ENCODE measurements at regions of chr13 and their contacts with region 1.

Region 1: GRCh38 chr13:95301183-95301967 is at the start of gene ABCC4:
- DNase-seq: peak; percentile 37 to 58 (median 50)
- H3K4me3 ChIP-seq: peak within 1 kb of the TSS; percentile 65 to 70
- H3K4me3 Mint-ChIP-seq: peak within 1 kb of the TSS; percentile 82 to 93 (median 88)
- H3K27ac ChIP-seq: peak within 1 kb of the TSS; percentile 43
- H3K27ac Mint-ChIP-seq: peak within 1 kb of the TSS; percentile 36 to 95 (median 54)
- H3K4me1 ChIP-seq: peaks cover 14% of the 10 kb centered on the region
- H3K4me1 Mint-ChIP-seq: peaks cover 22 to 40% (median 30%) of the 10 kb centered on the region in 4 donors
- H3K27me3 ChIP-seq: no peaks in the 10 kb centered on the region
- H3K27me3 Mint-ChIP-seq: peaks cover 0 to 2% of the 10 kb centered on the region in 2 donors
- total RNA-seq, gene ABCC4: 7.9 to 10.0 TPM

Region 2: DNA sequence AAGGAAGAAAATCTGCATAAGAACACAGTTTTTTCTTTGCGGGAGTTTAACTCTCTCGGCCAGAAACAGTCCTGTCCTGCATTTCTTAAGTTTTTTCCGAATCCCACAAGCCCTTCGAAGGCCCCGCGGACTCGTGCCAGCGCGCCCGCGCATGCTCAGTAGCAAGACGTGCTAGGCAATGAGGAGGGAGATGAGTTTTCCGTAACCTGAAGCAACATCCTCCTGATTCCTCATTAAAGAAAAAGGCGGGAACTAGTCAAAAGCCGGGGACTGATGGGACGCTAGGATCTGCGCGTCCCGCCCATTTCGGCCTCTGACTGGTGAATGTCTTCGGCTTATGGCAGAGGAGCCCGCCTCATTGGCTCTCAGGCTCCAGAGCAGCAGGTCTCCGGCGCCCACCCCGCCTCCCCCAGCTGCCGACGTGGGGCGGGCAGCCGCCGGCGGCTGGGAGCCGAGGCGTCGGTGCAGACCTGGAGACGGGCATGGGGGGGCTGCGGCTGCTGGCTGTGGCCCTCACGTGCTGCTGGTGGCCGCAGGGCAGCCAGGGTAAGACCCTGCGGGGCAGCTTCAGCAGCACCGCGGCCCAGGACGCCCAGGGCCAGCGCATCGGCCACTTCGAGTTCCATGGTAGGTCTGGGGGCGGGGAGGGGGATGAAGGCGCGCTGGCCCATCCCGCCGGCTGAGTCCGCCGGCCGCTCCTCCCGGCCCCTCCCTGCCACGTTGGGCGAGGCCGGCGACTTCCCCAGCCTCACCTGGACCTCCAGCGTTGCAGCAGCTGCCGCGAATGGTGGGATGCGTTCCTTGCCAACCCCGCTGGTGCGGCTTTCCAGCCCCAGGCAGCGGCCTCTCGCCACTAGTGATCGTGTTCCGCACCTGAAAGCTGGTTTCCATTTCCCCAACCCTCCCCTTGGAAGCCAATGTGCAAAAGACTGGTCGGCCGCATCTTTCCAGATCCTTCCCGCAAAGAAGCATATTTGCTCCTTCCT is 699.6 kb before region 1 on chr13 and contains the start of gene GPR180:
- CTCF ChIA-PET with region 1: no interaction called
- POLR2A ChIA-PET with region 1: no interaction called
- intact Hi-C with region 1: loop called (anchors 2 kb)
- DNase-seq: peak; percentile 86 to 93 (median 89)
- H3K4me3 ChIP-seq: peak within 1 kb of the TSS; percentile 36 to 85
- H3K4me3 Mint-ChIP-seq: peak within 1 kb of the TSS; percentile 83 to 92 (median 86)
- H3K27ac ChIP-seq: peak within 1 kb of the TSS; percentile 57
- H3K27ac Mint-ChIP-seq: peak within 1 kb of the TSS; percentile 86 to 95 (median 92)
- H3K4me1 ChIP-seq: peaks cover 18% of the 10 kb centered on the region
- H3K4me1 Mint-ChIP-seq: peaks cover 22 to 36% (median 29%) of the 10 kb centered on the region in 4 donors
- H3K27me3 ChIP-seq: no peaks in the 10 kb centered on the region
- H3K27me3 Mint-ChIP-seq: no peaks in the 10 kb centered on the region
- total RNA-seq, gene GPR180: 4.8 to 5.3 TPM

Region 3: GRCh38 chr13:95289020-95289444 is 12.3 kb before region 1 on chr13:
- CTCF ChIA-PET with region 1: interaction called, 10 read pairs
- POLR2A ChIA-PET with region 1: no interaction called
- intact Hi-C with region 1: no loop called
- DNase-seq: no peak
- H3K4me3 ChIP-seq: no peak overlapping the region
- H3K4me3 Mint-ChIP-seq: no peak overlapping the region
- H3K27ac ChIP-seq: no peak overlapping the region
- H3K27ac Mint-ChIP-seq: no peak overlapping the region
- H3K4me1 ChIP-seq: no peaks in the 10 kb centered on the region
- H3K4me1 Mint-ChIP-seq: peaks cover 0 to 7% (median 4%) of the 10 kb centered on the region in 4 donors
- H3K27me3 ChIP-seq: no peaks in the 10 kb centered on the region
- H3K27me3 Mint-ChIP-seq: no peaks in the 10 kb centered on the region

Region 4: DNA sequence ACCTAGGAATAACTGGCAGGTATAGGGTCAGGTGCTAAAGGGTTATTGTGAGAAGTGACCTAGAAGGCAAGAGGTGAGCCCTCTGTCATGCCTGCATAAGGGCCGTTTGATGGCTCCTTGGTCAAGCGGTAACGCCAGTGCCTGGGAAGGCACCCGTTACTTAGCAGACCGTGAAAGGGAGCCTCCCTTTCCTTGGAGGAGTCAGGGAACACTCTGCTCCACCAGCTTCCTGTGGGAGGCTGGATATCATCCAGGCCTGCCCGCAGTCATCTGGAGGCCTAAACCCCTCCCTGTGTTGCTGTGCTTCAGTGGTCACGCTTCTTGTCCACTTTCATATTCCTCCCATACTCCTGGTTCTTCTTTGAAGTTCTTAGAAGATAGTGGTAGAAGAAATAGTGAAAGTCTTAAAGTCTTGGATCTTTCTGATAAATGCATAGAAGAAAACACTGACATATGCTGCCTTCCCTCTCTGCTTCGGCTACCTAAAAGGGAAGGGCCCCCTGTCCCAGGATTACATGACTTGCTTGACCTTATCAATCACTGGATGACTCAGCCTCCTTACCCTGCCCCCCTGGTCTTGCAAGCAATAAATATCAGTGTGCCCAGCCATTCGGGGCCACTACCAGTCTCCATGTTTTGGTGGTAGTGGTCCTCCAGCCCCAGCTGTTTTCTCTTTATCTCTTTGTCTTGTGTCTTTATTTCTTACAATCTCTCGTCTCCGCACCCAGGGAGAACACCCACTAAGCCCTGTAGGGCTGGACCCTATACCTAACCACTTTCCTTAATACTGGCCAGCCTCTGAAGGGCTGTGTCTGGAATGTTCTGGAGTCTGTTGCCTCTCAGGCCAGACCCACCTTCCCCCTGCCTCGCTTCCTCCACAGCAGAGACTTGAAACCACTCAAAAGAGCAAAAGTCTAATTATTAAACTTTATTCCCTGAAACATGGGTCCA is 15.9 kb after region 1 on chr13:
- CTCF ChIA-PET with region 1: interaction called, 12 read pairs
- POLR2A ChIA-PET with region 1: no interaction called
- intact Hi-C with region 1: no loop called
- DNase-seq: no peak
- H3K4me3 ChIP-seq: no peak overlapping the region
- H3K4me3 Mint-ChIP-seq: peak overlapping the region in 1 of 8 donors; percentile 11
- H3K27ac ChIP-seq: no peak overlapping the region
- H3K27ac Mint-ChIP-seq: no peak overlapping the region
- H3K4me1 ChIP-seq: no peaks in the 10 kb centered on the region
- H3K4me1 Mint-ChIP-seq: peaks cover 0 to 4% (median 1%) of the 10 kb centered on the region in 4 donors
- H3K27me3 ChIP-seq: no peaks in the 10 kb centered on the region
- H3K27me3 Mint-ChIP-seq: peaks cover 3 to 7% of the 10 kb centered on the region in 2 donors

Region 5: DNA sequence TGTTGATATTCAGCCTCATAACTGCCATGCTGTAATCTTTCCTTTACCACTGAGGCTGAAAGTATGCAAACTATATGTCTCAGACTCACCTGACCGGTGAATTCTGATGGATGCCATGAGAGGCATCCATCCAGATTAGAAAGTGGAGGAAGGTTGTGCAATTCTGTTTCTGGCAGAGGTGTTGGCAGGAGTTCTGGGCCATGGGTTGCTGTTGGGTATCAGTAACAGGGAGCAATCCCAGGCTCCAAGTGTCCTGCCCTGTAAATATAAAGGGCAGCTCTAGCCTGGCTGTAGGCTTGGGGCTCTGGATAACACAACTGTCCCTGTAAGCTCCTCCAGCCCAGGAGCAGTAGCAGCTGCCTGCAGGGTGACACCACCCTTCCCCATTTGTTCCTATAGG is 77.2 kb after region 1 on chr13:
- CTCF ChIA-PET with region 1: interaction called, 105 read pairs
- POLR2A ChIA-PET with region 1: no interaction called
- intact Hi-C with region 1: loop called (anchors 1 kb)
- DNase-seq: no peak
- H3K4me3 ChIP-seq: no peak overlapping the region
- H3K4me3 Mint-ChIP-seq: no peak overlapping the region
- H3K27ac ChIP-seq: no peak overlapping the region
- H3K27ac Mint-ChIP-seq: no peak overlapping the region
- H3K4me1 ChIP-seq: no peaks in the 10 kb centered on the region
- H3K4me1 Mint-ChIP-seq: peaks cover 3 to 6% (median 4%) of the 10 kb centered on the region in 4 donors
- H3K27me3 ChIP-seq: no peaks in the 10 kb centered on the region
- H3K27me3 Mint-ChIP-seq: peaks cover 2 to 7% of the 10 kb centered on the region in 2 donors

Region 6: GRCh38 chr13:95480131-95480545 is 178.8 kb after region 1 on chr13:
- CTCF ChIA-PET with region 1: interaction called, 4 read pairs
- POLR2A ChIA-PET with region 1: no interaction called
- intact Hi-C with region 1: loop called (anchors 1 kb)
- DNase-seq: no peak
- H3K4me3 ChIP-seq: no peak overlapping the region
- H3K4me3 Mint-ChIP-seq: peak overlapping the region in 1 of 8 donors; percentile 35
- H3K27ac ChIP-seq: no peak overlapping the region
- H3K27ac Mint-ChIP-seq: no peak overlapping the region
- H3K4me1 ChIP-seq: no peaks in the 10 kb centered on the region
- H3K4me1 Mint-ChIP-seq: peaks cover 4 to 8% (median 8%) of the 10 kb centered on the region in 4 donors
- H3K27me3 ChIP-seq: no peaks in the 10 kb centered on the region
- H3K27me3 Mint-ChIP-seq: peaks cover 0 to 1% of the 10 kb centered on the region in 2 donors

Measured in CD4-positive, alpha-beta memory T cell (primary cell).